HEK293 (cell line): ENCODE measurements at regions of chr5 and their contacts with region 1.

Region 1: GRCh38 chr5:112492291-112492690 is 73.2 kb upstream of the EPB41L4A start:
- H3K4me3 ChIP-seq: no peak overlapping the region
- H3K27ac ChIP-seq: no peak overlapping the region
- H3K4me1 ChIP-seq: no peaks in the 10 kb centered on the region
- CTCF ChIP-seq: peak; percentile 84

Region 2: DNA sequence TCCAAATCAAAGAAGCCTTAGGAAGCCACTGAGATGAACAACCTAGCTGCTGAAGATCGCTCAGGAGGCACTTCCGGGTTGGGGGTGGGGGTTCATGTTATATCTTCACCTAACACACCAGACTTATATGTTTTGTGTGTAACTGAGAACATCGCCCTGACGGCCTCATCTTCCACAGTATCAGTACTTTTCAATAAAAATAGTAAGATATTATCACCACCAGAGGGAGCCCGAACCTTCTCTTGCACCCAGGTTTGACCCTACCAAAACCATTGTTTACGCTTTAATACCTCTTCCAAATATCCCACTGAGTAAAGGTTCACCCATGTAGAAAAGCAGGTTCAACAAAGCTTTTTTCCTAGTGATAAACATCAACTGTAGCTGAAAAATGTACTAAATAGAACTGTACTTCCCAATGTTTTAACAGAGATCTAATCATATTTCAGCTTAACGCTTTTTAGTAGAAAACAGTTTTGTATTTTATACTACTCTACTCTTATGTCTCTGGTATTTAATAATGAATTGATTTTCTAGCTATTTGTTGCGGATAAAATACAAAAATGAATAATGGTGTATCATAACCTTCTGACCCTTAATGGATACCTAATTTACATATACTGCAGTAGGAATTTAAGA is 317.2 kb before region 1 on chr5:
- CTCF ChIA-PET with region 1: interaction called, 20 read pairs
- POLR2A ChIA-PET with region 1: no interaction called
- H3K4me3 ChIP-seq: no peak overlapping the region
- H3K27ac ChIP-seq: no peak overlapping the region
- H3K4me1 ChIP-seq: no peaks in the 10 kb centered on the region
- CTCF ChIP-seq: 0 out of 2 replicates have a peak, but pooled peaks have one; percentile 12

Region 3: GRCh38 chr5:112329419-112330090 is 162.7 kb before region 1 on chr5:
- CTCF ChIA-PET with region 1: no interaction called
- POLR2A ChIA-PET with region 1: no interaction called
- H3K4me3 ChIP-seq: no peak overlapping the region
- H3K27ac ChIP-seq: no peak overlapping the region
- H3K4me1 ChIP-seq: no peaks in the 10 kb centered on the region
- CTCF ChIP-seq: no peak

Region 4: DNA sequence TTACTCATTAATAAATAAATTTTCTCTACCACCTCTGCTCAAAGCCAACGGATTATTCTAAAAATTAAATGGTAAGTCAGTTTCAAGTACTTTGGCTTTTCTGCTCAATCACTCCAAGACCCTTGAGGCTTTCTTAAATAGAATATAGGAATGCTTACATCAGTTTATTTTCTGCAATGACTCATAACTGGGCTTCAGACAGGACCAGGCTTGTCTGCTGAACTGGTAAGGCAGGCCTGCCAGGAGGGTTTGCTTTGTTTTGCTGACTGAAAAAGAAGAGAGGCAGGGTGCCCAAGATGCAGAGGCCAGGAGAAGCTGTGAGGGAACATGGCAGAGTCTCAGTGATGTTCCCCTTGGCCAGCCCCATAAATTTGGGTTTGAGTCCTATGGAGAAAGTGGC is 12.9 kb before region 1 on chr5:
- CTCF ChIA-PET with region 1: interaction called, 18 read pairs
- POLR2A ChIA-PET with region 1: no interaction called
- H3K4me3 ChIP-seq: no peak overlapping the region
- H3K27ac ChIP-seq: no peak overlapping the region
- H3K4me1 ChIP-seq: peaks cover 2% of the 10 kb centered on the region; the same call in 1 of the 2 replicates
- CTCF ChIP-seq: no peak

Region 5: GRCh38 chr5:112529525-112529924 is 37.2 kb after region 1 on chr5:
- CTCF ChIA-PET with region 1: interaction called, 10 read pairs
- POLR2A ChIA-PET with region 1: no interaction called
- H3K4me3 ChIP-seq: no peak overlapping the region
- H3K27ac ChIP-seq: no peak overlapping the region
- H3K4me1 ChIP-seq: no peaks in the 10 kb centered on the region
- CTCF ChIP-seq: no peak